CD4-positive, alpha-beta T cell (primary cell): ENCODE measurements at regions of chr20 and their contacts with region 1.

Region 1: GRCh38 chr20:59149651-59150504 is 13.7 kb upstream of the ZNF831 start:
- DNase-seq: peak; percentile 52 to 94 (median 72)
- ATAC-seq: peak; percentile 79
- H3K4me3 ChIP-seq: peak overlapping the region; percentile 21
- H3K4me3 Mint-ChIP-seq: peak overlapping the region; percentile 82
- H3K27ac ChIP-seq: peak overlapping the region; percentile 95 to 96
- H3K27ac Mint-ChIP-seq: peak overlapping the region; percentile 97
- H3K4me1 ChIP-seq: peaks cover 99% of the 10 kb centered on the region
- H3K4me1 Mint-ChIP-seq: peaks cover 95% of the 10 kb centered on the region
- H3K27me3 ChIP-seq: no peaks in the 10 kb centered on the region
- H3K27me3 Mint-ChIP-seq: no peaks in the 10 kb centered on the region
- CTCF ChIP-seq: no peak

Region 2: DNA sequence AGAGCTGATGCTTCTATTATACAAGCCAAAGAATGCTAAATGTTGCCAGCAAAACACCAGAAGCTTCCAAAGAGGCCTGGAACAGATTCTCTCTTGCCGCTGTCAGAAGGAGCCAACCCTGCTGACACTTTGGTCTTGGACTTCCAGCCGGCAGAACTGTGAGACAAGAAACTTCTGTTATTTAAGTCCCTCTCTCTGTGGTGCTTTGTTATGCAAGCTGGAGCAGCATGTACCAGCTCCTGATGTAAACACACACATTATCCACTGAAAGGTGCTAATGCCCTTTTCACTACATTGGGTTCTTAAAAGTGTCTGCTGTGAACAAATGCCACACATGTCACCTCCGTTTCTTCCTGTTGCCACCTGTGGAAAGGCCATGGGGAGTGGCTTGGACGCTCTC is 81.3 kb before region 1 on chr20:
- CTCF ChIA-PET with region 1: no interaction called
- POLR2A ChIA-PET with region 1: no interaction called
- intact Hi-C with region 1: no loop called
- DNase-seq: no peak
- ATAC-seq: no peak
- H3K4me3 ChIP-seq: no peak overlapping the region
- H3K4me3 Mint-ChIP-seq: no peak overlapping the region
- H3K27ac ChIP-seq: no peak overlapping the region
- H3K27ac Mint-ChIP-seq: no peak overlapping the region
- H3K4me1 ChIP-seq: no peaks in the 10 kb centered on the region
- H3K4me1 Mint-ChIP-seq: no peaks in the 10 kb centered on the region
- H3K27me3 ChIP-seq: no peaks in the 10 kb centered on the region
- H3K27me3 Mint-ChIP-seq: no peaks in the 10 kb centered on the region
- CTCF ChIP-seq: no peak

Region 3: GRCh38 chr20:59165891-59166709 is 16.2 kb after region 1 on chr20:
- CTCF ChIA-PET with region 1: interaction called, 10 read pairs
- POLR2A ChIA-PET with region 1: interaction called, 129 read pairs
- intact Hi-C with region 1: loop called (anchors 1 to 2 kb)
- DNase-seq: peak in 5 of 14 experiments; percentile 46 to 73 (median 67)
- ATAC-seq: peak; percentile 65
- H3K4me3 ChIP-seq: peak overlapping the region; percentile 71
- H3K4me3 Mint-ChIP-seq: peak overlapping the region; percentile 80
- H3K27ac ChIP-seq: peak overlapping the region; percentile 94 to 99
- H3K27ac Mint-ChIP-seq: peak overlapping the region; percentile 95
- H3K4me1 ChIP-seq: peaks cover 56% of the 10 kb centered on the region
- H3K4me1 Mint-ChIP-seq: peaks cover 98% of the 10 kb centered on the region
- H3K27me3 ChIP-seq: no peaks in the 10 kb centered on the region
- H3K27me3 Mint-ChIP-seq: no peaks in the 10 kb centered on the region
- CTCF ChIP-seq: no peak

Region 4: DNA sequence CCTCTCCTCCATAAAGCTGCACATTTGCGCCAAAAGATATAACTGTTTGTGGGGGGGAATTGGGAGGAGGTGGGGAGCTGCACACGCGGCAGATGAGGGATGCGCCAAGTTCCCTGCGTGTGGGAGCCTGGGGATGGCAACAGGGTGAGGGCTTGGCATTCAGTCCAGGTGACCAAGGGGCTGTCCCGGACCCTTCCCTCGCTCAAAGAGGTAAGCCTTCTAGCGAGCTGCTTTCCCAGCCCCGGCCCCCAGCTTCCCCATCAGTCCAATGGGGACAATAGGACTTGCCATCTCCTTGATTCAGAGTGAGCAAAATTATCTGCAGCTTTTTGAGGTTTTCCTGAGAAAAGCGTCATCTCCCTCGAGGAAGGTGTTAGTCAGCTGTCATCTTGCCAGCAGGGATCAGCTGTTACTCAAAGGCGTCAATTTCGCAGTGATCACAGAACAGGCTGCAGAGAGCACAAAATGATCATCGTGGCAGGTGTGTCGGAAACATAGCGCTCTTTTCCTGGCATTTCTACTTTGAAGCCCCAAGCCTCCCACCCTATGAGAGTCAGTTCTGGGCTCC is 35.1 kb after region 1 on chr20:
- CTCF ChIA-PET with region 1: no interaction called
- POLR2A ChIA-PET with region 1: no interaction called
- intact Hi-C with region 1: loop called in 1 of 2 experiments (anchors 5 kb)
- DNase-seq: no peak
- ATAC-seq: no peak
- H3K4me3 ChIP-seq: no peak overlapping the region
- H3K4me3 Mint-ChIP-seq: no peak overlapping the region
- H3K27ac ChIP-seq: no peak overlapping the region
- H3K27ac Mint-ChIP-seq: peak overlapping the region; percentile 69
- H3K4me1 ChIP-seq: peaks cover 22% of the 10 kb centered on the region
- H3K4me1 Mint-ChIP-seq: peaks cover 57% of the 10 kb centered on the region
- H3K27me3 ChIP-seq: no peaks in the 10 kb centered on the region
- H3K27me3 Mint-ChIP-seq: no peaks in the 10 kb centered on the region
- CTCF ChIP-seq: no peak

Region 5: GRCh38 chr20:59537991-59538390 is 388.1 kb after region 1 on chr20:
- CTCF ChIA-PET with region 1: no interaction called
- POLR2A ChIA-PET with region 1: no interaction called
- intact Hi-C with region 1: no loop called
- DNase-seq: no peak
- ATAC-seq: no peak
- H3K4me3 ChIP-seq: no peak overlapping the region
- H3K4me3 Mint-ChIP-seq: no peak overlapping the region
- H3K27ac ChIP-seq: no peak overlapping the region
- H3K27ac Mint-ChIP-seq: no peak overlapping the region
- H3K4me1 ChIP-seq: no peaks in the 10 kb centered on the region
- H3K4me1 Mint-ChIP-seq: no peaks in the 10 kb centered on the region
- H3K27me3 ChIP-seq: no peaks in the 10 kb centered on the region
- H3K27me3 Mint-ChIP-seq: peaks cover 41% of the 10 kb centered on the region
- CTCF ChIP-seq: no peak